Mammary epithelial cell (primary cell): ENCODE measurements at regions of chr2 and their contacts with region 1.

Region 1: GRCh38 chr2:112138159-112138773 is at the start of gene FBLN7:
- DNase-seq: no peak
- H3K4me3 ChIP-seq: peak within 1 kb of the TSS; percentile 13 to 51 (median 44)
- H3K27ac ChIP-seq: no peak within 1 kb of the TSS
- H3K4me1 ChIP-seq: peaks cover 11% of the 10 kb centered on the region
- H3K27me3 ChIP-seq: peaks cover 4% of the 10 kb centered on the region
- CTCF ChIP-seq: no peak
- total RNA-seq, gene FBLN7: 0.21 to 1.5 TPM

Region 2: DNA sequence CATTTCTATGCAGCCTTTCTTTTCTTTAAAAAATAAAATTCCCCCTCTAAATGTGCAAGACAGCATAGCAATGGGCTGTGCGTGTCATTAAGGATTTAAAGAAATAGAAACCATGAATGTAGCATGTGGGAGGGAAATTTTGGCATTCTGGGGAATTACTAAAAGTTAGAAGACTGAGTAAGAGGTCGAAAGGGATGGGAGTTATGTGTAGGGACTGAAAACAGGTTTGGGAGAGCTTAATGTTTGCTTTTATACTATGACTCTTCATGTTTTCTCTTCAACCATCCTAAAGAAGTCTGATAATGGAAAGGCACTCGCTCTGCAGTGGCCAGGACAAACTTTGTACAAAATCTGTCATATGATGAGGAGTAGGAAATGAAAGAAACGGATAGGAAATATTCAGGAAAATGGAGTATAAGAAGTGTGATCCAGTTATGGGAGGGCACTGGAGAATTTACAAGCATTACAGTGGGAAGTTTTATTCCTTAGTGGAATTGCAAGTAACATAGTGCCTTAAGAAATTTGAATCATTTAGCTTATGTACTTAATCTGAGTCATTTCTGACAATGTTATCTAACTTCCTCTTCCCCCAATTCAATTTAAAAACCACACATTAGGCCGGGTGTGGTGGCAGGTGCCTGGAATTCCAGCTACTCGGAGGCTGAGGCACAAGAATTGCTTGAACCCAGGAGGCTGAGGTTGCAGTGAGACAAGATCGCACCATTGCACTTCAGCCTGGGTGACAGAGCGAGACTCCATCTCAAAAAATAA is 62.6 kb before region 1 on chr2:
- CTCF ChIA-PET with region 1: no interaction called
- dilution Hi-C with region 1: loop called (anchors 5 kb)
- in situ Hi-C with region 1: no loop called
- intact Hi-C with region 1: no loop called
- DNase-seq: peak; percentile 33
- H3K4me3 ChIP-seq: no peak overlapping the region
- H3K27ac ChIP-seq: no peak overlapping the region
- H3K4me1 ChIP-seq: peaks cover 21% of the 10 kb centered on the region
- H3K27me3 ChIP-seq: no peaks in the 10 kb centered on the region
- CTCF ChIP-seq: no peak

Region 3: DNA sequence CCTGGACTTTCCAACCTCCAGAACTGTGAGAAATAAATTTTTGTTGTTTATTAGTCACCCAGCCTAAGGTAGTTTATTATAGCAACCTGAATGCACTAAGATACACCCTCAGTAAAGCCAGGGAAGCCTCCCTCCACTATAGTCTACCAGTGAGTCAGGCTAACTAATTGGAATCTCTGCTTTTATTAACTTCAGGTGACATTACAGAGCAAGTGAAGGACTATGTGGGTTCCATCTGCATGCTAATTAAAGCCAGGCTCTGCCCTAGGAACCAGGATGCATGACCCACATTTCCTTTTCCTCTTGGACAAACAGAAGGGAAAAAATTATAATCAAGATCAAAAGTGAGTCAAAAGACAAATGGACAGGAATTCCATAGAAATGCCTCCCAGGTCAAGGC is 60.5 kb after region 1 on chr2:
- CTCF ChIA-PET with region 1: no interaction called
- dilution Hi-C with region 1: loop called (anchors 5 kb)
- in situ Hi-C with region 1: no loop called
- intact Hi-C with region 1: no loop called
- DNase-seq: peak; percentile 43
- H3K4me3 ChIP-seq: no peak overlapping the region
- H3K27ac ChIP-seq: no peak overlapping the region
- H3K4me1 ChIP-seq: no peaks in the 10 kb centered on the region
- H3K27me3 ChIP-seq: peaks cover 2% of the 10 kb centered on the region
- CTCF ChIP-seq: no peak